Naive thymus-derived CD4-positive, alpha-beta T cell (primary cell): ENCODE measurements at regions of chr1 and their contacts with region 1.

Region 1: GRCh38 chr1:1307908-1308755 is at the starts of genes ACAP3 and PUSL1:
- DNase-seq: peak; percentile 88 to 94 (median 91)
- ATAC-seq: peak; percentile 87
- H3K4me3 ChIP-seq: peak within 1 kb of the TSS; percentile 83
- H3K4me3 Mint-ChIP-seq: peak within 1 kb of the TSS; percentile 82 to 94 (median 88)
- H3K27ac ChIP-seq: peak within 1 kb of the TSS; percentile 90
- H3K27ac Mint-ChIP-seq: peak within 1 kb of the TSS; percentile 47 to 94 (median 89)
- H3K4me1 ChIP-seq: peaks cover 31 to 34% of the 10 kb centered on the region in 2 donors
- H3K4me1 Mint-ChIP-seq: peaks cover 11 to 24% (median 17%) of the 10 kb centered on the region in 7 donors
- H3K27me3 ChIP-seq: no peaks in the 10 kb centered on the region
- H3K27me3 Mint-ChIP-seq: no peaks in the 10 kb centered on the region
- total RNA-seq, gene ACAP3: 51.5 to 70.8 (median 58.2) TPM
- total RNA-seq, gene PUSL1: 17.7 to 25.4 (median 19.4) TPM

Region 2: GRCh38 chr1:1019122-1019999 is 288.8 kb before region 1 on chr1:
- CTCF ChIA-PET with region 1: no interaction called
- POLR2A ChIA-PET with region 1: no interaction called
- intact Hi-C with region 1: loop called (anchors 5 to 10 kb)
- DNase-seq: peak; percentile 69 to 90 (median 82)
- ATAC-seq: peak; percentile 93
- H3K4me3 ChIP-seq: peak overlapping the region; percentile 11
- H3K4me3 Mint-ChIP-seq: peak overlapping the region in 9 of 10 donors; percentile 48 to 80 (median 68)
- H3K27ac ChIP-seq: peak overlapping the region; percentile 27
- H3K27ac Mint-ChIP-seq: peak overlapping the region in 4 of 9 donors; percentile 40 to 65 (median 55)
- H3K4me1 ChIP-seq: peaks cover 4 to 10% of the 10 kb centered on the region in 2 donors
- H3K4me1 Mint-ChIP-seq: peaks cover 9 to 26% (median 15%) of the 10 kb centered on the region in 7 donors
- H3K27me3 ChIP-seq: no peaks in the 10 kb centered on the region
- H3K27me3 Mint-ChIP-seq: peaks cover 0 to 17% (median 0%) of the 10 kb centered on the region in 5 donors

Region 3: DNA sequence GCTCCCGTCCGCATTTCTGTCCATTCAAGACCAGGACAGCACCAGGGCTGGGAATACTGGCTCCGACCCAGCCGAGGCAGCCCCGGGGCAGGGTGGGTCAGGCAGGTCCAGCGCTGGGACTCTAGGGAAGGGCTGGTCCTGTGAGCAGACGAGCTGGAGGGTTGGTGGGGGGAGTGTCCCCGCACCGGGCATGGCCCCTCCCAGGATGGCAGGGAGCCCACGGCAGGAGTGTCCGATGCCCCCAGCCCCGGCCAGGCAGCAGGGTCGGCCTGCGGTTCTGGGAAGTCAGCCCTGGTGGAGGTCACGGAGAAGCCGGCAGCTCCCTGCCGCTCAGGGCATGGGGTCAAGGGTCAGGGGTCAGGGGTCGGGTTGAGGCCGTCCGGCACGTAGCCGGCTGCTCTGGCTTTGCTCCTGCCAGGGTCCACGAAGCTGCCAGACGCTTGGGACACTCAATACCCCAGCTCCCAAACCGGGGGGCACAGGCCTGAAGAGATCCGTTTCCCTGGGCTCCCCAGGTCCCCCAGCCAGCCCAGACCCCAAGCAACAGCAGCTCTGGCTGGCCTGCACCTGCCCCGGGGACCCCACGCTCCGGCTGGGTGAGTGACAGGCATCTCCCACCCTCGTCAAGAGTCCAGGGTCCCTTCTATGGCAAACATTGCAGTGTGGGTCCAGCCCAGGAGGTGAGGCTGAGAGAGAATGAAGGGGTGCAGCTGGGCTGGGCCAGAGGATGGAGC is 68.4 kb before region 1 on chr1:
- CTCF ChIA-PET with region 1: no interaction called
- POLR2A ChIA-PET with region 1: no interaction called
- intact Hi-C with region 1: no loop called
- DNase-seq: no peak
- ATAC-seq: no peak
- H3K4me3 ChIP-seq: no peak overlapping the region
- H3K4me3 Mint-ChIP-seq: no peak overlapping the region
- H3K27ac ChIP-seq: no peak overlapping the region
- H3K27ac Mint-ChIP-seq: no peak overlapping the region
- H3K4me1 ChIP-seq: no peaks in the 10 kb centered on the region
- H3K4me1 Mint-ChIP-seq: peaks cover 0 to 2% (median under 1%) of the 10 kb centered on the region in 7 donors
- H3K27me3 ChIP-seq: no peaks in the 10 kb centered on the region
- H3K27me3 Mint-ChIP-seq: no peaks in the 10 kb centered on the region

Region 4: GRCh38 chr1:1250786-1251284 is 57.3 kb before region 1 on chr1:
- CTCF ChIA-PET with region 1: no interaction called
- POLR2A ChIA-PET with region 1: no interaction called
- intact Hi-C with region 1: loop called in 1 of 2 experiments (anchors 5 kb)
- DNase-seq: peak in 8 of 9 donors; percentile 39 to 79 (median 67)
- ATAC-seq: peak; percentile 95
- H3K4me3 ChIP-seq: peak overlapping the region; percentile 14
- H3K4me3 Mint-ChIP-seq: peak overlapping the region; percentile 33 to 82 (median 74)
- H3K27ac ChIP-seq: peak overlapping the region; percentile 69
- H3K27ac Mint-ChIP-seq: peak overlapping the region; percentile 40 to 96 (median 91)
- H3K4me1 ChIP-seq: peaks cover 10 to 12% of the 10 kb centered on the region in 2 donors
- H3K4me1 Mint-ChIP-seq: peaks cover 4 to 29% (median 11%) of the 10 kb centered on the region in 7 donors
- H3K27me3 ChIP-seq: no peaks in the 10 kb centered on the region
- H3K27me3 Mint-ChIP-seq: peaks cover 0 to 3% (median 0%) of the 10 kb centered on the region in 5 donors

Region 5: DNA sequence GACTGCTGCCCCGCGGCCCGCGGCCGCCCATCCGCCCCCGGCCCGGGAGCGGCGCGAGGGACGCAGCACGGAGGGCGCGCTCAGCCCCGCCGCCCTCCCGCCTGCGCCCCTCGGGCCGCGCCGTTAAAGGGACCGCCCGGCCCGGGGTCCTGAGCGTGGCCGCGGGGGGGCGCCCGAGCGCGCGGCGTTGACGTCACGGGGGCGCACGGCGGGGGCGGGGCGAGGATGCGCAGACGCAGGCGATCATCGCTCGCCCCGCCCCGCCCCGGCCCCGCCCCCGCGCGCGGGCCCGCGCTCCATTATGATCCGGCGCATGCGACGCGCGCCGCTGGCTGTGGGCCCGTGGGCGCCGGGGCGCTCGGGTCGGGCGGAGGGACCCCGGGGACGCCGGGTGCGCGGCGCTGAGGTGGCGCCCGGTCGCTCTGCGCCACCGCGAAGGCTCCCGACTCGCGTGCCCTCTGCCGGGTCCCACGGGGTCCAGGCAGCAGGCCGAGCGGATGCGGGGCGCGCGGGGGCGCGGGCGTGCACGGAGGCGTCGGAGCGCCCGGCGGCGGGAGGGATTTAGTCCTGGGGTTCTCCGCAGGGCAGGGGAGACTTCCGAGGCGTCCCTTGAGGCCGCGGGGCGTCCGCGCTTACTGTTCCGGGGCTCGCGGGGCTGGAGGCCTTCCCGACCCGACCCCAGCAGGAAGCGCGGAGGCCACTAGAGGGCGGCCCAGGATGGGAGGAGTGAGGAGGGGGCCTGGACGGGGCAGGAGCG is 41.3 kb after region 1 on chr1 and contains the start of gene DVL1:
- CTCF ChIA-PET with region 1: interaction called, 4 read pairs
- POLR2A ChIA-PET with region 1: interaction called, 5 read pairs
- intact Hi-C with region 1: loop called in 1 of 2 experiments (anchors 1 kb)
- DNase-seq: peak; percentile 51 to 86 (median 78)
- ATAC-seq: peak; percentile 94
- H3K4me3 ChIP-seq: peak within 1 kb of the TSS; percentile 56
- H3K4me3 Mint-ChIP-seq: peak within 1 kb of the TSS; percentile 40 to 85 (median 76)
- H3K27ac ChIP-seq: peak within 1 kb of the TSS; percentile 92
- H3K27ac Mint-ChIP-seq: peak within 1 kb of the TSS in 5 of 9 donors; percentile 34 to 76 (median 56)
- H3K4me1 ChIP-seq: peaks cover 0 to 19% of the 10 kb centered on the region in 2 donors
- H3K4me1 Mint-ChIP-seq: peaks cover 13 to 34% (median 29%) of the 10 kb centered on the region in 7 donors
- H3K27me3 ChIP-seq: peaks cover 0 to 6% of the 10 kb centered on the region in 2 donors
- H3K27me3 Mint-ChIP-seq: peaks cover 0 to 24% (median 9%) of the 10 kb centered on the region in 5 donors
- total RNA-seq, gene DVL1: 40.2 to 54.9 (median 45.9) TPM

Region 6: GRCh38 chr1:1471389-1472052 is 163.4 kb after region 1 on chr1 and contains the start of gene ATAD3B:
- CTCF ChIA-PET with region 1: no interaction called
- POLR2A ChIA-PET with region 1: no interaction called
- intact Hi-C with region 1: loop called in 1 of 2 experiments (anchors 1 kb)
- DNase-seq: peak; percentile 80 to 95 (median 88)
- ATAC-seq: peak; percentile 98
- H3K4me3 ChIP-seq: peak within 1 kb of the TSS; percentile 68
- H3K4me3 Mint-ChIP-seq: peak within 1 kb of the TSS; percentile 78 to 97 (median 89)
- H3K27ac ChIP-seq: peak within 1 kb of the TSS; percentile 90
- H3K27ac Mint-ChIP-seq: peak within 1 kb of the TSS; percentile 77 to 98 (median 92)
- H3K4me1 ChIP-seq: peaks cover 9 to 14% of the 10 kb centered on the region in 2 donors
- H3K4me1 Mint-ChIP-seq: peaks cover 6 to 39% (median 25%) of the 10 kb centered on the region in 7 donors
- H3K27me3 ChIP-seq: no peaks in the 10 kb centered on the region
- H3K27me3 Mint-ChIP-seq: no peaks in the 10 kb centered on the region
- total RNA-seq, gene ATAD3B: 42.5 to 53.8 (median 51.7) TPM